HEK293 (cell line): ENCODE measurements at regions of chr1 and their contacts with region 1.

Region 1: DNA sequence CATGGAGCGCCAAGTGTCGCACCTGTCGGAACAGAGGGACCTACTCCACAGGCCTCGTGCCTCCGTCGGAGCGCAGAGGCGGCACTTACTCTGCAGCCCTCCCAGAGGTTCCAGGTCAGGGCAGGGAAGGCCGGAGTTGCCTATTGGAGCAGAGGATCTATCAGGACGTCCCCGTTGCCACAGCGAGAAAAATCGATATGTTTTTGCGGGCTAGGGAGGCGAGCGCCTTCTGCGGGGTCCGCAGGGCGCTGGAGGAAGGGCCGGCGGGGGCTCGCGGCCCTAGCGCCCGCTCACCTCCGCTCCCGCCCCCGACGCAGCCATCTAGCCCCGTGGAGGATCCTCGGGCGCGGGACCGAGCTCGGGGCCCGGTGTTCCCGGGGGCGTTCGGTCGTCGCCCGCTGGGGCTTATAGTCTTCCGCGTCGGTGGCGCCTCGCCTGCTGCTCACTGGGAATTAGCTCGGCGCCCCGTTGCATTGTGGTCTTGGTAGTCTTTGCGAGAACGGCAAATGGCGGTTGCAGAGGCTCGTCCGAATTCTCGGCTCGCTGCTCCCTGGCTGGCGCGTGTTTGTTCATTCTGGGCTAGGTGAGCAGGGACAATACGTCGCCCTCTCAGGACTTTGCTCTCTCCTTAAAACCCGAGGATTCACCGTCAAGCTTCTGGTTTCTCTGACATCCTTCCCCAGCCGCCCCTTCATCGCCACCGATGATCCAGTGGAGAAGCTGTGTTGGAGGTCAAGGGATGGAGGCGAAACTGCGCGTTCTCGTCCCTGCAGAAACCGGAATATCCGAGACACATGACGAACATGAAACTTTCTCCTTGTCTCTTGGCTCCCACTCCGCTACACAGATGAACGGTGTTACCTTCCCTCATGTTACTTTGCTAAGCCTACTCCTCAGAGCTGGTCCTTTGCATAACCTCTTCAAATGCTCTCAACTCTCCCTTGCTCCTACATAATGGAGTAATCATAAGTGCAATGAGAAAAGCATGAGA is at the start of gene JTB:
- H3K4me3 ChIP-seq: peak within 1 kb of the TSS; percentile 90
- H3K27ac ChIP-seq: peak within 1 kb of the TSS; percentile 88
- H3K4me1 ChIP-seq: no peaks in the 10 kb centered on the region
- CTCF ChIP-seq: peak; percentile 6; the same call in 1 of the 2 replicates

Region 2: DNA sequence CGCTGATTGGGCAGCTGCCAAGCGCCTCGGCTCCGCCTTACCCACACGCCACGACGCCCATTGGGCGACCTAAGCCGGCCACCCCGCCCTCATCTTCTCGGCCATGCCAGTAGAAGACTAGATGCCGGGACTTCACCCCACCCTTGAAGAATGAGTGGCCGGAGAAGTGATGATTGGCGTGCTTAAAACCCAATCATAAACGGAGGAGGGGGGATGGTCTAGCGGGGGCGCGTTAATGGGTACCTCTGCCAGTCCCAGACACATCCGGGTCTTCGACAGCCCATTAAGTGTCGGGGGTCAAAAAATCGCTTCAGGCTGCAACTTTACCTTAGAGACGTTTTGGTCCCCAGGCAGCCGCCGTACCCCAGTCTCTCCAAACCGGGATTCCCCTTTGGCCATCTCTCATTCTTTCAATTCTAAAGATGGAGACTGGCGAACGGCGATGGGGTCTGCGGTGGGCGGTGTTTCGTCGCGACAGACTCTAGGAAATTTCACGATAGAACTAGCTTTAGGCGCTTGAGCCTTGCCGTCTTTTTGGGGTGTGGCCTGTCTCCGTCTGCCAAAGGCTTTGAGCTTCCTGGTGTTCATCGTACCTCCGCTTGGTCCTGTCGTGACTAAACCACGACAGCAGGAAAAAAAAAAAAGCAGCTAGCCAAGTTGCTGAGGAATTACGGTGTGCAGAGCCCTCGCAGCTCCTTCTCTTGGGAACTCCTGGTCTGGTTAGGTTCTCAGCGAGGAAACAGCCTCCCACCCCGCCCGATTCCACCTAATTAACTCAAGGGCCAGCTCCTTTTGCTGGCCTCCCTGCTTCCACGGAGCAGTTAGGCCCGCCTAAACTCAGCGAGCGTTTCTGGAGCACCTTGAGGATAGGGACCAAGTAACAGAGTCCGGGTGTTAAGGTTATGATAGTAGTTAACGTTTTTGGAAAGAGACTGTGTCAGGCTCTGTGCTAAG is 54.3 kb before region 1 on chr1 and contains the start of gene GATAD2B:
- CTCF ChIA-PET with region 1: no interaction called
- POLR2A ChIA-PET with region 1: interaction called, 16 read pairs
- H3K4me3 ChIP-seq: peak within 1 kb of the TSS; percentile 95
- H3K27ac ChIP-seq: peak within 1 kb of the TSS; percentile 78
- H3K4me1 ChIP-seq: peaks cover 4% of the 10 kb centered on the region
- CTCF ChIP-seq: no peak

Region 3: DNA sequence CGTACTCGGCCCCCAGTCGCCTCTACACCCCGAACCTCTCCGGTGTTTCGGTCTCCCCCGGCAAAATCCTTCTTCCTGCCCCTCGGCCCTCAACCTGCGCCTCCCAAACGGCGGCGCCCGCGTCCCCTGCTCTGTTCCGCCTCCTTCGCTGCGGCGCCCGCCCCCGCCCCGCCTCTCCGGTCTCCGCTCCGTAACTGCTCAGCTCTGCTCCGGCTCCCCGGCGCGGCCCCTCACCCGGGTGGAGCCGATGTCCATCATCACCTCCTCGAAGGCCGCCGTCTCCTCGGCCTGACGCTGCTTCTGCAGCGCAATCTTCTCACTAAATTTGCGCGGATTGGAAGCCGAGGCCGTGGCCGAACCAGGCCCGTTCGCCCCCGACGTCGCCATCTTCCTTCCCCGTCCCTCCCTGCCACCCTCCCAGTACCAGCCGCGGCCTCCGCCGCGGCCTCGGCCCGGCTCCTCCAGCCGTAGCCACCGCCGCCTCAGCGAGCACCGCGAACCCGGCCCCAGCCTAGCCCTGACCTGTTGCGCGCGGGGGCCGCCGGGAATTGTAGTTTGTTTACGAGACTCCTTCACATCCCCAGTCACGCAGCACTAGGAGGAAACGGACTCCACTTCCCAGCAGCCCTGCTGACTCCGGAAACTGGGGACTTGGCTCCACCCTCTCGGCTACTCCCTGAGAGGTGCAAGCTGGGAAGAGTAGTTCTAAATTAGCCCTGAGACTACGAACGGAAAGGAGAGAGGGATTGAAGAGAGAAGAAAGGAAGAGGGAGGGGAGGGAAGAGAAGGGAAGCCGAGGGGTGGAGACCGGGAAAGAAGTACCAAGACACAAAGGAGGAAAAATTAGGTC is 19.2 kb before region 1 on chr1 and contains the start of gene CRTC2:
- CTCF ChIA-PET with region 1: interaction called, 5 read pairs
- POLR2A ChIA-PET with region 1: interaction called, 58 read pairs
- H3K4me3 ChIP-seq: peak within 1 kb of the TSS; percentile 89
- H3K27ac ChIP-seq: peak within 1 kb of the TSS; percentile 90
- H3K4me1 ChIP-seq: peaks cover 13% of the 10 kb centered on the region; the same call in 1 of the 2 replicates
- CTCF ChIP-seq: peak; percentile 75; the same call in 1 of the 2 replicates